ENCODE measurements at regions of chr20 and their contacts with region 1.

Region 1: DNA sequence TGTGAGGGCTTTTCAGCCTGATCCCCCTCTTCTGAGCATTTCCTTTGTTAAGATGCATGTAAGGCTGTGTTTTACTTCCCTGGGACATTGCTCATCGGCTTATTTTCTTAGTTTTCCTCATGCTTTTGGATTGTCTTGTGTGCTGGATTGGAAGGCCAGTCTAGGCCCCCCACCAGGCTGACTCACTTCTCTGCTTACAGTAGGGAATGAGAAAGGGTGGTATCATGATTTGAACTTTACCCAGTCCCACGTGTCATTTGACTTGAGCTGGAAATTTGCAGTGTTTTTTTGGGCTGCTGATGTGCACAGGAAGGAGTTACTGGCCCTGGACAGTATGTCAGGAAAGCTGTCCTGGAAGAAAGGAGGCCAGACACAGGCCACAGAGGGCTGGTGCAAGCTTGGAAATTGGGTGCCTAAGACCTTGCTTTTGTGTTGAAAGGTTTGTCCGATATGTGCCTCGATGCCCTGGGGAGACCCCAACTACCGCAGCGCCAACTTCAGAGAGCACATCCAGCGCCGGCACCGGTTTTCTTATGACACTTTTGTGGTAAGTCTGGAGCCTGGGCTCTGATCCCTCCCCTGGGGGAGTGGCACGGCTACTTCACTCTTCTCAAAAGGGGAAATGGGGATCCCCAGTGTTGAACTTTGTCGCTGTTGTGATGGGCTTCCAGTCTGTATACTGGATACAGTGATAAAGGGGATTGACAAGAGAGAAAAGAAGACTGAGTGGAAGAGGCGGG is 12.8 kb downstream of the RNF114 start:
- DNase-seq: no peak
- ATAC-seq: no peak
- H3K4me3 ChIP-seq: no peak overlapping the region
- H3K27ac ChIP-seq: no peak overlapping the region
- H3K4me1 ChIP-seq: no peaks in the 10 kb centered on the region
- H3K27me3 ChIP-seq: no peaks in the 10 kb centered on the region
- CTCF ChIP-seq: no peak
- EP300 ChIP-seq: no peak
- POLR2A ChIP-seq: no peak
- RAD21 ChIP-seq: no peak

Region 2: DNA sequence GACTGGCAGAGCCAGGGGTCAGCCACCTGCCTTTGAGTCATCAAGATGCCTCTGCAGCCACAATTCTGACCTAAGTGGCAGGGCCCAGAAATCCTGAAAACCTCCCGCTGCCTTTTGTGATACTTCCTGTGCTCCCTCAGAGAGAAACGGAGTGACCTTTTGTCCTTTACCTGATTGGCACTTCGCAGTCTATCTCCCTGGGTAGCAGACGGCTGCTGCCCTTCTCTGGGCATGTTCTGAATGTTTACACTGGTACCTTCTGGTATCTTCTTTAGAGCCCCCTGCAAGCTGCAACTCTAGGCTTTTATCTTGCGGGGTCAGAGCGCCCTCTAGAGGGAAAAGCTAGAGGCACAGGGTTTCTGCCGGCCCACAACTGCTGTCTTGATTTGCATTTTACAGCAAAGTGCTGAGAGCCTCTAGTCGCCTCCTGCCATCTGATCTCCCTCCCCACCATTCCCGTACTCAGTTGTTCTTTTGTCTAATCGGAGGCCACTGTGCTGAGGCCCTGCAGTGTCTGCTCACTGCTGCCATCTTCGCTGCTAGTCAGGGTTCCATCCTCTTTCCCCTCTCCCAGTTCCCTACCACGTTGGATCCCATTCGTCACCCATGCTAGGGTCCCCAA is 60.5 kb before region 1 on chr20:
- CTCF ChIA-PET with region 1: no interaction called
- POLR2A ChIA-PET with region 1: no interaction called
- in situ Hi-C with region 1: no loop called
- intact Hi-C with region 1: no loop called
- DNase-seq: peak; percentile 75 to 78 (median 77)
- ATAC-seq: peak; percentile 81
- H3K4me3 ChIP-seq: no peak overlapping the region
- H3K27ac ChIP-seq: no peak overlapping the region
- H3K4me1 ChIP-seq: peaks cover 8 to 44% of the 10 kb centered on the region in 2 experiments
- H3K27me3 ChIP-seq: no peaks in the 10 kb centered on the region
- CTCF ChIP-seq: peak; percentile 87 to 90 (median 87)
- EP300 ChIP-seq: no peak
- POLR2A ChIP-seq: no peak
- RAD21 ChIP-seq: peak; percentile 48 to 81

Region 3: DNA sequence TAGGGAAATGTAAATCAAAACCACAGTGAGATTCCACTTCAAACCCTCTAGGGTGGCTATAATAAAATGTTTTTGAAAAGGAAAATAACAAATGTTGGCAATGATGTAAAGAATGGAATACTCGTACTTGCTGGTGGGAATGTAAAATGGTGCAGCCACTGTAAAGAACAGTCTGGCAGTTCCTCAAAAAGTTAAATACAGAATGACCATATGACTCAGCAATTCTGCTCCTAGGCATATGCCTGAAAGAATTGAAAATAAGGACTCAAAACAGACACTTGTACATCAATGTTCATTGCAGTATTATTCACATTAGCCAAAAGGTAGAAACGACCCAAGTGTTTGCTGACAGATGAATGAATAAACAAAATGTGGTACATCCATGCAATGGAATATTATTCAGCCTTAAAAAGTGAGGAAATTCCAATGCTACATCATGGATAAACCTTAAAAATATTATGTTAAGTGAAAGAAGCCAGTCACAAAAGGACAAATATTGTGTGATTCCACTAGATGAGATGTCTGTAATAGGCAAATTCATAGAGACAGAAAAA is 23.0 kb before region 1 on chr20:
- CTCF ChIA-PET with region 1: no interaction called
- POLR2A ChIA-PET with region 1: no interaction called
- in situ Hi-C with region 1: no loop called
- intact Hi-C with region 1: no loop called
- DNase-seq: peak in 1 of 4 experiments; percentile 36
- ATAC-seq: peak; percentile 40; the same call in 1 of the 3 replicates
- H3K4me3 ChIP-seq: no peak overlapping the region
- H3K27ac ChIP-seq: 0 out of 3 replicates have a peak overlapping the region, but pooled peaks have one; percentile 1
- H3K4me1 ChIP-seq: no peaks in the 10 kb centered on the region; a peak in 2 of 5 replicates
- H3K27me3 ChIP-seq: no peaks in the 10 kb centered on the region
- CTCF ChIP-seq: no peak
- EP300 ChIP-seq: no peak
- POLR2A ChIP-seq: no peak
- RAD21 ChIP-seq: no peak

Region 4: DNA sequence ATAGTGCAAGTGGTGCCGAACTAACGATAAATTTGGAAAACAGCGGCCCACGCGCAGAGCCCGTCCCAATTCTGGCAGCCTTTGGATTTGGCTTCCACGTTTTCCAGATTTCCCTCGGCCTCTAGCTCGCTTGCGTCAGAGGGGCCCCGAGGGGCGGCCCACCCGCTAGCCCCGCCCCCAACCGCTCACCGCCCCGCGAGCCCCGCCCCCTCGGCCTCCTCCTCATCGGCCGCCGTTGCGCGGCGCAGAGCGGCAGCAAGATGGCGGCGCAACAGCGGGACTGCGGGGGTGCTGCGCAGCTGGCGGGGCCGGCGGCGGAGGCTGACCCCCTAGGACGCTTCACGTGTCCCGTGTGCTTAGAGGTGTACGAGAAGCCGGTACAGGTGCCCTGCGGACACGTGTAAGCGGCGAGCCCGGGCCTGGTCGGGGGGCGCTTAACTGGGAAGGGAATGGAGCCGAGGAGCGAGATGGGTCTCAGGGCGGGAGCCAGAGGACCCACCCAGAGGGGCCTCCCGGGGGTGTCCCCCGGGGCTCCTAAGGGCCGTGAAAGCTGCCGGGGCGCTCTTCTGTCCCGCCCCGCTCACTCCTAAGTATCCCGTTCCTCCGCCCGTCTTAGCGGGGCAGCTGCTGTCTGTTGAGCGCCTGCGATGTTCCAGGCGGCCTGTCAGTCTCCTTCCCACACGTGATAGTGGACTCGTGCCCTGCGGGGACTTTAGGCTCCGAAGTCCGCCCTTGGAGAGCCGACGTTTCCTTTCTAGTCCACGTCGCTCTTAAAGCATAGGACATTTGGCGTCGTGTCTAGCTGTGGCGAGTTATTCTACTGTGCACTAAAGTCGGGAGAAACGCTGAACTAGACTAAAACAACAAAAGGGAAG is 12.6 kb before region 1 on chr20 and contains the start of gene RNF114:
- CTCF ChIA-PET with region 1: no interaction called
- POLR2A ChIA-PET with region 1: interaction called, 30 read pairs
- in situ Hi-C with region 1: no loop called
- intact Hi-C with region 1: no loop called
- DNase-seq: peak; percentile 94 to 99 (median 99)
- ATAC-seq: peak; percentile 93
- H3K4me3 ChIP-seq: peak within 1 kb of the TSS; percentile 95
- H3K27ac ChIP-seq: peak within 1 kb of the TSS; percentile 82
- H3K4me1 ChIP-seq: peaks cover 22 to 28% of the 10 kb centered on the region in 2 experiments
- H3K27me3 ChIP-seq: no peaks in the 10 kb centered on the region
- CTCF ChIP-seq: no peak
- EP300 ChIP-seq: peak; percentile 43; the same call in 1 of the 2 replicates
- POLR2A ChIP-seq: peak; percentile 87
- RAD21 ChIP-seq: no peak
- polyA plus RNA-seq, gene RNF114: 38.6 to 64.5 TPM